Natural killer cell (primary cell): ENCODE measurements at regions of chr9 and their contacts with region 1.

Region 1: GRCh38 chr9:75138260-75139040 is 50.1 kb downstream of the OSTF1 start:
- DNase-seq: peak in 1 of 2 donors; percentile 21
- ATAC-seq: peak; percentile 79 to 86 (median 83)
- H3K4me3 ChIP-seq: no peak overlapping the region
- H3K4me3 Mint-ChIP-seq: peak overlapping the region; percentile 70
- H3K27ac ChIP-seq: peak overlapping the region; percentile 45
- H3K27ac Mint-ChIP-seq: peak overlapping the region; percentile 77 to 87
- H3K4me1 ChIP-seq: peaks cover 29% of the 10 kb centered on the region
- H3K4me1 Mint-ChIP-seq: peaks cover 60 to 91% of the 10 kb centered on the region in 2 donors
- H3K27me3 ChIP-seq: no peaks in the 10 kb centered on the region
- H3K27me3 Mint-ChIP-seq: no peaks in the 10 kb centered on the region
- CTCF ChIP-seq: no peak

Region 2: DNA sequence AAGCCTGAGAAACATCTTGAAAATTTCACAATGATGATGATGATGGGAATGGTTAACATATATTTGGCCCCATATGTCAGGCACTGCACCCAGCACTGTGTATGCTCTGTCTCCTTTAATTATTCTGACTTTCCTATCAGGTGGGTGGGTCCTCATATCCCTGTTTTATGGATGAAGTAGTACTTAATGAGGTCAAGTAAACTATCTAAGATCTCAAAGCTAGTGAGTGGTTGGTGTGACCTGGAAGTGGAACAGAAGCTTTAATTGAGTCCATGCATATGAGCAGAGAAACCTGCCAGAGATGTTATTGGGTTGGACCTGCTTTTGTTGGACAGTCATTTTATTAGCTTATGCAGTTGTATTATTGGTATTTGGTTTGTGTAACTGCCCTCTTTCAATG is 44.6 kb before region 1 on chr9:
- intact Hi-C with region 1: loop called (anchors 2 kb)
- DNase-seq: no peak
- ATAC-seq: no peak
- H3K4me3 ChIP-seq: no peak overlapping the region
- H3K4me3 Mint-ChIP-seq: peak overlapping the region; percentile 73
- H3K27ac ChIP-seq: no peak overlapping the region
- H3K27ac Mint-ChIP-seq: peak overlapping the region; percentile 92 to 100
- H3K4me1 ChIP-seq: peaks cover 52% of the 10 kb centered on the region
- H3K4me1 Mint-ChIP-seq: peaks cover 92 to 94% of the 10 kb centered on the region in 2 donors
- H3K27me3 ChIP-seq: no peaks in the 10 kb centered on the region
- H3K27me3 Mint-ChIP-seq: no peaks in the 10 kb centered on the region
- CTCF ChIP-seq: no peak

Region 3: DNA sequence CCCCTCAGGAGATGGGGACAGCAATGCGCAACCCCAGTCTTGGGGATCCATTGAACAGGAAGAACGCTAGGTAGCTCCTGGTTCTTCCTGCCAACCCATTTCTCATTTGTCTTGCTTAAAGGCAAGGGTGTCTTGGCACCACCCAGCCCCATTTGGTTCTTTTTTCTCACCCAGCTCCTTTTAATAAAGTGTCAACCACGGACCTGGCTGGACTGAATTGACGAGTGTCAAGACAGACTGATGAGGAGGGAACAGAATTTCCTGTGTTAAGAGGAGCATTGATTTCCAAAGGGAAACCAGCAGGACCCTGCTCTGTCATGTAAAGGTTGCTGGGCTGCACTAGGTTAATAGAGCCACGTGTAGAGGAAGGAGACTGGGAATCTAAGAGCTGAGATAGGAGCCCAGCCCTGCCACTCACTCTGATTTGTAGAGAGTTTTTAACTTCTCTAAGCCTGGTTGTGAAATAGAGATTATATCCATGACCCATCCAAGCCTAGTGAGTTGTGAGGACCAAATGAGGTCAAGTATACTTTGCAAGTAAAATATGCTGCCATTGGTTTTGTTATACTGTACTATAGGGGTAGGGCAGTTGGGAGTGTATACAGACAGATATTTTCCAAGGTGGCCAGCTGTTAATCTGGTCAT is 16.4 kb before region 1 on chr9:
- intact Hi-C with region 1: loop called (anchors 2 kb)
- DNase-seq: peak in 1 of 2 donors; percentile 18
- ATAC-seq: peak; percentile 77 to 78 (median 78)
- H3K4me3 ChIP-seq: no peak overlapping the region
- H3K4me3 Mint-ChIP-seq: peak overlapping the region; percentile 77
- H3K27ac ChIP-seq: peak overlapping the region; percentile 32
- H3K27ac Mint-ChIP-seq: peak overlapping the region; percentile 76 to 83
- H3K4me1 ChIP-seq: peaks cover 21% of the 10 kb centered on the region
- H3K4me1 Mint-ChIP-seq: peaks cover 65 to 70% of the 10 kb centered on the region in 2 donors
- H3K27me3 ChIP-seq: no peaks in the 10 kb centered on the region
- H3K27me3 Mint-ChIP-seq: no peaks in the 10 kb centered on the region
- CTCF ChIP-seq: no peak